Dendritic cell treated with granulocyte-macrophage colony-stimulating factor and Interleukin-4, amounts not matched to agents 40 ng/mL and 50 ng/mL, for 4 days (primary cell): ENCODE measurements at regions of chr3 and their contacts with region 1.

Region 1: DNA sequence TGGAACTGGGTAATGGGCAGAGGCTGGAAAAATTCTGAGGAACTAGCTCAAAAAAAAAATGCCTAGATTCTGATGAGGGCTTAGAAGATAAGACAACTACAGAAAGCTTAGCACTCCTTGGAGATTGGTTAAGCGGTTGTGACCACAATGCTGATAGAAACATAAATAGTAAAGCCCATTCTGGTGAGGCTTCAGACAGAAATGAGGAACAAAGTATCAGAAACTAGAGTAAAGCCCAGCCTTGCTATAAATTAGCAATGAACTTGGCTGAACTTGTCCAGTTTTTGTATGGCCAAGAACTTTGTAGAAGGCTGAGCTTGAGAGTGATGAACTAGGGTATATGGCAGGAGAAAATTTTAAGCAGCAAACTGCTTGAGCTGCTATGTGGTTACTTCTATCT is 25.4 kb downstream of the GOLGB1 start:
- H3K4me3 Mint-ChIP-seq: no peak overlapping the region
- H3K27ac Mint-ChIP-seq: peak overlapping the region; percentile 75
- H3K4me1 Mint-ChIP-seq: peaks cover 11% of the 10 kb centered on the region
- H3K27me3 Mint-ChIP-seq: no peaks in the 10 kb centered on the region

Region 2: GRCh38 chr3:120956143-120956542 is 768.0 kb before region 1 on chr3:
- intact Hi-C with region 1: no loop called
- H3K4me3 Mint-ChIP-seq: no peak overlapping the region
- H3K27ac Mint-ChIP-seq: no peak overlapping the region
- H3K4me1 Mint-ChIP-seq: no peaks in the 10 kb centered on the region
- H3K27me3 Mint-ChIP-seq: no peaks in the 10 kb centered on the region

Region 3: GRCh38 chr3:121786485-121786884 is 62.4 kb after region 1 on chr3:
- intact Hi-C with region 1: loop called (anchors 10 kb)
- H3K4me3 Mint-ChIP-seq: no peak overlapping the region
- H3K27ac Mint-ChIP-seq: no peak overlapping the region
- H3K4me1 Mint-ChIP-seq: no peaks in the 10 kb centered on the region
- H3K27me3 Mint-ChIP-seq: no peaks in the 10 kb centered on the region

Region 4: GRCh38 chr3:121855555-121855954 is 131.4 kb after region 1 on chr3:
- intact Hi-C with region 1: no loop called
- H3K4me3 Mint-ChIP-seq: no peak overlapping the region
- H3K27ac Mint-ChIP-seq: no peak overlapping the region
- H3K4me1 Mint-ChIP-seq: peaks cover 11% of the 10 kb centered on the region
- H3K27me3 Mint-ChIP-seq: no peaks in the 10 kb centered on the region